Heart right ventricle (tissue), 16 donors: ENCODE measurements at regions of chr9 and their contacts with region 1.

Region 1: GRCh38 chr9:97982683-97983588 is at the start of gene ANP32B:
- DNase-seq: peak; percentile 90 to 92
- ATAC-seq: peak; percentile 88 to 95 (median 93)
- H3K4me3 ChIP-seq: peak within 1 kb of the TSS; percentile 75 to 100 (median 96)
- H3K27ac ChIP-seq: peak within 1 kb of the TSS; percentile 95 to 100 (median 98)
- H3K4me1 ChIP-seq: peaks cover 0 to 62% (median 44%) of the 10 kb centered on the region in 9 donors
- H3K27me3 ChIP-seq: no peaks in the 10 kb centered on the region
- CTCF ChIP-seq: peak; percentile 73 to 99 (median 91)
- total RNA-seq, gene ANP32B: 48.2 to 68.2 (median 56.9) TPM

Region 2: DNA sequence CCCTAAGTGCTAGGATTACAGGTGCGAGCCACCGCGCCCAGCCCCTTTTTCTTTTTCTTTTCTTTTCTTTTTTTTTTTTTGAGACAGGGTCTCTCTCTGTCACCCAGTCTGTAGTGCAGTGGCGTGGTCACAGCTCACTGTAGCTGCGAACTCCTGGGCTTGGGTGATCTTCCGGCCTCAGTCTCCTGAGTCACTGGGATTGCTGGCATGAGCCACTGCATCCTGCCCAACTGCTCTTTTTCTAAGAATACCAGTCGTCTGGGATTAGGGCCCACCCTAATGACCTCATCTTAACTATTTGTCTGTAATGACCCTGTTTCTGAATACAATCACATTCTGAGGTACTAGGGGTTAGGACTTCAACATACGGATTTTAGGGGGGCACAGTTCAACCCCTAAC is 39.5 kb after region 1 on chr9:
- intact Hi-C with region 1: loop called in 1 of 10 experiments (anchors 5 kb)
- DNase-seq: no peak
- ATAC-seq: peak in 1 of 8 donors; percentile 16
- H3K4me3 ChIP-seq: no peak overlapping the region
- H3K27ac ChIP-seq: peak overlapping the region in 9 of 10 donors; percentile 36 to 85 (median 70)
- H3K4me1 ChIP-seq: peaks cover 0 to 45% (median 19%) of the 10 kb centered on the region in 9 donors
- H3K27me3 ChIP-seq: no peaks in the 10 kb centered on the region
- CTCF ChIP-seq: no peak

Region 3: GRCh38 chr9:98034593-98035546 is 51.9 kb after region 1 on chr9:
- intact Hi-C with region 1: loop called in 8 of 10 experiments (anchors 2 to 10 kb)
- DNase-seq: peak; percentile 75 to 88
- ATAC-seq: peak; percentile 80 to 92 (median 86)
- H3K4me3 ChIP-seq: peak overlapping the region in 3 of 10 donors; percentile 7 to 22 (median 22)
- H3K27ac ChIP-seq: no peak overlapping the region
- H3K4me1 ChIP-seq: peaks cover 0 to 22% (median 15%) of the 10 kb centered on the region in 9 donors
- H3K27me3 ChIP-seq: no peaks in the 10 kb centered on the region
- CTCF ChIP-seq: peak; percentile 69 to 92 (median 89)

Region 4: DNA sequence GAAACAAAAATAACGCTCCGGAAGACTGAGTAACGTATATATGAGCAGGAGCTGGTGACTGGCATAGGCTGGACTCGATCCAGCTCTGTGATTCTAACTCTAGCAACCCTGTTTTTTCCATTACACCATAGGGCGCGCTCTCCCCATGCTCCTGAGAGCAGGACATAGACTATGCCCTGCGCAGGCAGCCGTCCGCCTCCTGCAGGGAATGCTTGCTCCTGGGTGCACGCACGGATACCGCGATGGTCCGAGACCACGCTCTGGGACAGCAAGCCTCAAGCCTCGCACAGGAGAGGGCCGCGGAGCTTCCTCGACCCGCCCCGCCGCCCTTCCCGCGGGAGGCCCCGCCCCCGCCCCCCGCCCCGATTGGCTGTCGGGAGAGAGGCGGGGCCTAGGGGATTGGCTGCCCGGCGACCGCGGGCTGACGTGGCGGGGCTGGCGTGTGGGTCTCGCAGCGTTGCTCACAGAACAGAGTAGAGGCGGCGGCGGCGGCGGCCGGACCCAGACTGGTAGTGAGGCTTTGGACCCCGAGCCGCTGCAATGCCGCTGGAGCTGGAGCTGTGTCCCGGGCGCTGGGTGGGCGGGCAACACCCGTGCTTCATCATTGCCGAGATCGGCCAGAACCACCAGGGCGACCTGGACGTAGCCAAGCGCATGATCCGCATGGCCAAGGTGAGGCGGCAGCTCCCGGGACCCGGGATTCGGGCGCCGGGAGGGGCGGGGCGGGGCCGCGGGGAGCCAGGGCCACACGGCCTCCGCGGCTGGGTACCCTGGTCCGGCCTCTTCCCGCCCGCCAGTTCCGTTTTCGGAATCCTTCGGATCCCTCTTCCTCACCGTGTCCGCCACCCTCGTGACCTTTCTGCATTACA is 73.6 kb after region 1 on chr9 and contains the start of gene NANS:
- intact Hi-C with region 1: loop called in 3 of 10 experiments (anchors 1 to 2 kb)
- DNase-seq: peak; percentile 92 to 93
- ATAC-seq: peak; percentile 98 to 100 (median 99)
- H3K4me3 ChIP-seq: peak within 1 kb of the TSS; percentile 50 to 96 (median 84)
- H3K27ac ChIP-seq: peak within 1 kb of the TSS; percentile 63 to 97 (median 92)
- H3K4me1 ChIP-seq: peaks cover 0 to 36% (median 14%) of the 10 kb centered on the region in 9 donors
- H3K27me3 ChIP-seq: no peaks in the 10 kb centered on the region
- CTCF ChIP-seq: peak in 2 of 9 donors; percentile 19
- total RNA-seq, gene NANS: 20.0 to 43.7 (median 30.0) TPM